ENCODE measurements at regions of chr12 and their contacts with region 1.

Region 1: DNA sequence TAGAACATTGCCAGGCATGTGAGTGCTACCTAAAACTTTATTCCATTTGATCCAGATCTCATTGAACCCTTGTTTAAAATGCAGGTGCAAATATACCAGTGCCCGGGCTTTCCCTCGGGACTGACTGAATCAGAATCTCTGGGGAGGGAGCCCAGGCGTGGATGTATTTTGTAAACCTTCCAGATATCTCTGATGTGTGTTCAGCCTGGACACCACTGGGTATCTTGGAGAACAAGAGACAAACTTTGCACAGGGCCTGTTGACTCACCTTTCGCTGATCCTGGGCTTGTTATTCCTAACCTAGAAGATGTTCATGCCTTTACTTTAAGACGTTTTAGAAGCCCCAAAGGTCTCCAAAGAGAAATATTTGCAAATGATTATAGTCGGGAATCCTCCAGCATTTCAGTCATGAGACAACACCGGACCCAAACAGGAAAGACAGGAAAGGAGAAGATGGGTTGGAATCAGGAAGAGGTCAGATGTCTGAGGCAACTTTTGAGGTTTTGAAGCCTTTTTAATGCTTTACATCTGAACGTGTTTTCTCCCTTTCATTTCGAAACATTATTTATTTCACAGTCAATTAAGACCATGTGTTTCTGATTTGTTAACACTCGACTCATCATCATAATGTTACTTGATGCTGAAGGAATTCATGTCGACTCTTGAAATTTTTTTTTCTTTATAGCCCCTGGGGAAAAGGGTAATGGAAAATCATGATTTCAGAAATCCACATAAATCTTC is 118.6 kb downstream of the PLXNC1 start:
- DNase-seq: peak; percentile 61
- ATAC-seq: peak; percentile 19
- H3K4me3 ChIP-seq: no peak overlapping the region
- H3K27ac ChIP-seq: peak overlapping the region; percentile 81; the same call in 1 of the 2 replicates
- H3K4me1 ChIP-seq: peaks cover 10% of the 10 kb centered on the region
- H3K27me3 ChIP-seq: no peaks in the 10 kb centered on the region
- CTCF ChIP-seq: no peak
- POLR2A ChIP-seq: no peak
- RAD21 ChIP-seq: no peak

Region 2: DNA sequence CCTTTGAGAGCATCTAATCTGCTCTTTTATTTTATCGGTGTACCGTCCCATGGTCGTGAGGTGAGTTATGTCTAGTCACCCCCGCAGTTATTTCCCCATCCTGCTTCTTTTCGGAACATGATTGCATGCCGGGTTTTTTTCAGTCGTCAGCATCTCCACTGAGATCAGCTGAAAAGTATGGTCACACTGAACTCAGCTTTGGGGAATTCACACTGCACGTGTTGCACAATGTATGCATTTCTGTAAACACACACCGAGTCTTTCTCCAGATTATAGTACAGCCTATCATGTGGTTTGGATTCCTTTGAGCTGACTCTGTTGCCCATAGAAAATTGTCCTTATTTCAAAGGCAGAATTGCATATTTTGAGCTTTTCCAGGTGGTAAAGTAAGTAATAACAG is 94.0 kb before region 1 on chr12:
- CTCF ChIA-PET with region 1: no interaction called
- POLR2A ChIA-PET with region 1: interaction called, 4 read pairs
- dilution Hi-C with region 1: no loop called
- in situ Hi-C with region 1: no loop called
- intact Hi-C with region 1: loop called (anchors 5 kb)
- DNase-seq: peak; percentile 99
- ATAC-seq: peak; percentile 93
- H3K4me3 ChIP-seq: no peak overlapping the region
- H3K27ac ChIP-seq: no peak overlapping the region; the same call in 1 of the 2 replicates
- H3K4me1 ChIP-seq: peaks cover 22% of the 10 kb centered on the region
- H3K27me3 ChIP-seq: peaks cover 12% of the 10 kb centered on the region
- CTCF ChIP-seq: no peak
- POLR2A ChIP-seq: no peak
- RAD21 ChIP-seq: no peak

Region 3: GRCh38 chr12:94277426-94278000 is 10.5 kb after region 1 on chr12:
- CTCF ChIA-PET with region 1: no interaction called
- POLR2A ChIA-PET with region 1: no interaction called
- dilution Hi-C with region 1: no loop called
- in situ Hi-C with region 1: no loop called
- intact Hi-C with region 1: no loop called
- DNase-seq: peak; percentile 26
- ATAC-seq: no peak
- H3K4me3 ChIP-seq: no peak overlapping the region
- H3K27ac ChIP-seq: no peak overlapping the region
- H3K4me1 ChIP-seq: peaks cover 2% of the 10 kb centered on the region; the same call in 1 of the 2 replicates
- H3K27me3 ChIP-seq: peaks cover 4% of the 10 kb centered on the region
- CTCF ChIP-seq: no peak
- POLR2A ChIP-seq: no peak
- RAD21 ChIP-seq: no peak

Region 4: GRCh38 chr12:94427501-94428381 is 160.8 kb after region 1 on chr12:
- CTCF ChIA-PET with region 1: no interaction called
- POLR2A ChIA-PET with region 1: no interaction called
- dilution Hi-C with region 1: no loop called
- in situ Hi-C with region 1: no loop called
- intact Hi-C with region 1: loop called (anchors 5 kb)
- DNase-seq: peak; percentile 82
- ATAC-seq: peak; percentile 93
- H3K4me3 ChIP-seq: no peak overlapping the region
- H3K27ac ChIP-seq: peak overlapping the region; percentile 36; the same call in 1 of the 2 replicates
- H3K4me1 ChIP-seq: peaks cover 2% of the 10 kb centered on the region; the same call in 1 of the 2 replicates
- H3K27me3 ChIP-seq: no peaks in the 10 kb centered on the region
- CTCF ChIP-seq: no peak
- POLR2A ChIP-seq: no peak
- RAD21 ChIP-seq: no peak